CD8-positive, alpha-beta T cell (primary cell): ENCODE measurements at regions of chr7 and their contacts with region 1.

Region 1: DNA sequence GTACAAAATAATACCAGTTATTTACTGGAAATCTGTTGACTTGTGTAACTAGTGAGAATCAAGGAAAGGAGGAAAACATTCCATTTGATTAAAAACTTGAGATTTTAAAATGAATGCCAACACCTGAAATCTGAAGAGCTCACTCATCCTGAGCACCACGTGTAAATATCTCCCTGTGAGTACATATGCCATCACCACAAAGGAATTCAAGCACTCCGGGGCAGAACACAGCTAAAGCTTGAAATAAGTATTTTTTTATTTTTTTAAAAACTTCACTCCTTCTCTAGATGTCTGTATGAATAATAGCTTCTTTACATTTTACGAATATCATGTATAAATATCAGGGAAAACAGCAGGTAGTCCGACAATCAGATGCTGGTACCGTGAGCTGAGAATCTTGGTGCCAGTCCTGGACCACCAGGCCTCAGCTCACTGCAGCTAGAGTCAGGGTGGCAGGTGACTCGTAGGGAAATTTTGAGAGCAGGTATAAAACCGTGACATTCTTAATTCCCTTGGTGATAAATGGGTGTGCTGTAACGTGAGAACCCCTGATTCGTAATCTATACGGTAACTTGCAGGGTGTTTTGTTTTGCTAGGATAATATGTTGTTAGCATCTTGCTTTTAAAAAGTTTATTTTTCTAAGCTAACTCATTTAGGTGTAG is 12.7 kb downstream of the LMTK2 start:
- DNase-seq: no peak
- ATAC-seq: no peak
- H3K4me3 ChIP-seq: no peak overlapping the region
- H3K4me3 Mint-ChIP-seq: no peak overlapping the region
- H3K27ac ChIP-seq: no peak overlapping the region
- H3K27ac Mint-ChIP-seq: no peak overlapping the region
- H3K4me1 ChIP-seq: no peaks in the 10 kb centered on the region
- H3K4me1 Mint-ChIP-seq: peaks cover 42% of the 10 kb centered on the region
- H3K27me3 ChIP-seq: no peaks in the 10 kb centered on the region
- H3K27me3 Mint-ChIP-seq: no peaks in the 10 kb centered on the region
- CTCF ChIP-seq: no peak

Region 2: DNA sequence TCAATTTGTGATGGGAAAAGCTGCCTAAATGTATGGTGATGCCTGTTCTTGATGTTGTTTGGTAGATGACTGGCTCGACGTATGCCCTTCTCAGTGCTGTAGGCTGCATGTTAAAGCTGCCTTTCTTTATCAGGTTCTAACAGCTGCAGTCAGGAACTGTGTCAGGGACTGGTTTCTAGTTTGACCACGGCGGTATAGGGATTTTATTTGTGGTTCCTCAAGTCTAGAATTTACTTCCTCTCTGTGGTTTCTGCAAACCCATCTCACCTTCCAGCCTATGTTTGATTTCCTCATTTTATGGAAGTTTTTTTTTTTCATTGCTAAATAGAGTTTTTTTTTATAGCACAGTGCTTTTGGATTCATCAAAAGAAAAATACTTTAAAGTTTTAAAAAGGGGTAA is 13.8 kb after region 1 on chr7:
- CTCF ChIA-PET with region 1: no interaction called
- POLR2A ChIA-PET with region 1: interaction called, 4 read pairs
- intact Hi-C with region 1: loop called in 1 of 2 experiments (anchors 2 kb)
- DNase-seq: peak in 3 of 9 experiments; percentile 10 to 74 (median 62)
- ATAC-seq: peak; percentile 42
- H3K4me3 ChIP-seq: no peak overlapping the region
- H3K4me3 Mint-ChIP-seq: peak overlapping the region; percentile 30
- H3K27ac ChIP-seq: no peak overlapping the region
- H3K27ac Mint-ChIP-seq: no peak overlapping the region
- H3K4me1 ChIP-seq: peaks cover 33% of the 10 kb centered on the region
- H3K4me1 Mint-ChIP-seq: peaks cover 58% of the 10 kb centered on the region
- H3K27me3 ChIP-seq: no peaks in the 10 kb centered on the region
- H3K27me3 Mint-ChIP-seq: no peaks in the 10 kb centered on the region
- CTCF ChIP-seq: no peak

Region 3: GRCh38 chr7:98157761-98158160 is 38.4 kb after region 1 on chr7:
- CTCF ChIA-PET with region 1: no interaction called
- POLR2A ChIA-PET with region 1: no interaction called
- intact Hi-C with region 1: no loop called
- DNase-seq: no peak
- ATAC-seq: no peak
- H3K4me3 ChIP-seq: no peak overlapping the region
- H3K4me3 Mint-ChIP-seq: no peak overlapping the region
- H3K27ac ChIP-seq: no peak overlapping the region
- H3K27ac Mint-ChIP-seq: no peak overlapping the region
- H3K4me1 ChIP-seq: no peaks in the 10 kb centered on the region
- H3K4me1 Mint-ChIP-seq: no peaks in the 10 kb centered on the region
- H3K27me3 ChIP-seq: no peaks in the 10 kb centered on the region
- H3K27me3 Mint-ChIP-seq: no peaks in the 10 kb centered on the region
- CTCF ChIP-seq: no peak

Region 4: GRCh38 chr7:98816241-98816640 is 696.9 kb after region 1 on chr7:
- CTCF ChIA-PET with region 1: no interaction called
- POLR2A ChIA-PET with region 1: no interaction called
- intact Hi-C with region 1: no loop called
- DNase-seq: no peak
- ATAC-seq: no peak
- H3K4me3 ChIP-seq: no peak overlapping the region
- H3K4me3 Mint-ChIP-seq: no peak overlapping the region
- H3K27ac ChIP-seq: no peak overlapping the region
- H3K27ac Mint-ChIP-seq: no peak overlapping the region
- H3K4me1 ChIP-seq: no peaks in the 10 kb centered on the region
- H3K4me1 Mint-ChIP-seq: no peaks in the 10 kb centered on the region
- H3K27me3 ChIP-seq: peaks cover 0 to 2% of the 10 kb centered on the region in 2 experiments
- H3K27me3 Mint-ChIP-seq: peaks cover 11% of the 10 kb centered on the region
- CTCF ChIP-seq: no peak